ENCODE measurements at regions of chr12 and their contacts with region 1.

Region 1: GRCh38 chr12:52442600-52443061 is 8.5 kb upstream of the KRT75 start:
- DNase-seq: peak; percentile 51 to 77
- ATAC-seq: peak; percentile 87 to 89
- H3K4me3 ChIP-seq: no peak overlapping the region
- H3K27ac ChIP-seq: peak overlapping the region; percentile 56 to 79
- H3K4me1 ChIP-seq: peaks cover 28% of the 10 kb centered on the region
- CTCF ChIP-seq: peak; percentile 35; the same call in 2 of the 3 replicates
- EP300 ChIP-seq: peak in 1 of 2 experiments; percentile 53; a peak in 1 of 5 replicates
- POLR2A ChIP-seq: no peak
- RAD21 ChIP-seq: peak; percentile 64 to 69

Region 2: DNA sequence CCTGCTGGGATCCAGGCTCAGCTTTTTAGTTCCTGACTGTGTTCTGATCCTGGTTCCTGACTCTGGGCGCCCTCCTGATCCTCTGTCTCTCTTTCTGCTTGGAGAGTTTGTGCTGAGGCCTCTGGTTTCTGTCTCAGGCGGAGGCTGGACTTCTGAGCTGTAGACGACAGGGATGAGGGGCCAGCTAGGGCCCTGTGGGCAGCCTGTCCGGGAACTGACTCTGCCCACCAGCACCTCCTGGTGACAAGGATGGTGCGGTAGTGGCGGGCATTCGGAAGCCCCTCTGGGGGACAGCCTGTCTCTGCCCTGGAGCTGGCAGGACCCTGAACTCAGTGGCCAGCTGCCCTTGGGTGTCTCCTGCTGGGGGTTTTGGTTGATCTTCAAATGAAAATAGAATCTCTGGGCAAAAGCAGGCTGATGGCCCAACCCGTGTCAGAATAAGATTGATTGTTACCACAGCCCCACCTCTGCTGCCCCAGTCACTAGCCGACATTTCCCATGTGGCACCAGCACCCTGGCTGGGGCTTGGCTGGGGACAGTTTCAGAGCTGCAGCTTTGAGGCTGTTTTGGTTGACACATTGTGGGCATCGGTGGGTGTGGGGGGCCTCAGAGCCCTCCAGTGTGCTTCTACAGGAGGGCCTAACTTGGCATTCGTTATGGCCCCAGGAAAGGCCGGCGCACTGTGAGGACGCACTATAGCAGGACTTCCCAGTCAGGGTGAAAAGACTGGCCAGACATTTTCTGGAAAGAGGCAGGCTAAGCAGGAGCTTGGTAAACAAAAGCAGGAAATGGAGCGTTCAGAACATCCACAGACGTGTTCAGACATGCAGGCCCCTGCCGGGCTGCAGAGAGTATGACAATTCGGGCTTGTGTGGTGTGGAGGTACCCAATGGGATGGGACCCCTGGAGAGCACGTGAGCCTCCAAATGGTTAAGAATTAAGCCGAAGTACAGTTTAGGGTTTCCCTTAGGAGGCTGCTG is 267.0 kb before region 1 on chr12:
- CTCF ChIA-PET with region 1: no interaction called
- POLR2A ChIA-PET with region 1: no interaction called
- DNase-seq: no peak
- ATAC-seq: peak in 1 of 2 experiments; percentile 8; a peak in 3 of 6 replicates
- H3K4me3 ChIP-seq: no peak overlapping the region
- H3K27ac ChIP-seq: peak overlapping the region; percentile 52 to 85
- H3K4me1 ChIP-seq: peaks cover 45% of the 10 kb centered on the region
- CTCF ChIP-seq: no peak
- EP300 ChIP-seq: no peak
- POLR2A ChIP-seq: no peak
- RAD21 ChIP-seq: no peak

Region 3: GRCh38 chr12:52413788-52414345 is 28.8 kb before region 1 on chr12:
- CTCF ChIA-PET with region 1: interaction called, 12 read pairs
- POLR2A ChIA-PET with region 1: no interaction called
- DNase-seq: no peak
- ATAC-seq: peak in 1 of 2 experiments; percentile 40; a peak in 2 of 6 replicates
- H3K4me3 ChIP-seq: no peak overlapping the region
- H3K27ac ChIP-seq: peak overlapping the region in 1 of 2 experiments; percentile 37; a peak in 1 of 6 replicates
- H3K4me1 ChIP-seq: peaks cover 29% of the 10 kb centered on the region
- CTCF ChIP-seq: no peak
- EP300 ChIP-seq: no peak
- POLR2A ChIP-seq: no peak
- RAD21 ChIP-seq: no peak

Measured in A549 (cell line).